Heart left ventricle (tissue), 16 donors: ENCODE measurements at regions of chr12 and their contacts with region 1.

Region 1: DNA sequence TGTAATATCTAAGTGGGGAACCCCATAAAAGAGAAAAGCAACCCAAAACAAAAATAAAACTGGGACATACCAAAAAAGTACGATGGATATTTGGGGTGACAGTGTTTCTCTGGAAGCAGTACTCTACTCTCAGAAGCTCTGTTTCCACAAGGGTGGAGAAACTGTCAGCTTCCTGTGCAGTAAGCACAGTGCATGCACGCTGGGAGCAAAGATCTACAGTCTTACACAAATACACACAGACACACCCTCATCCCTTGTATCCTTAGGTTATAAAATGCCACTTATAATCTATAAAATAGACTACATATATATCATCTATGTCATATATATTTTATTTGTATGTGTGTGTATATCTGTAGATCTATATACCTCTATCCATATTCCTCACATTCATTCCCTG is 225.8 kb upstream of the SOX5 start:
- DNase-seq: no peak
- ATAC-seq: no peak
- H3K4me3 ChIP-seq: no peak overlapping the region
- H3K27ac ChIP-seq: no peak overlapping the region
- H3K4me1 ChIP-seq: peaks cover 0 to 5% (median 0%) of the 10 kb centered on the region in 12 donors
- H3K27me3 ChIP-seq: no peaks in the 10 kb centered on the region
- CTCF ChIP-seq: no peak
- POLR2A ChIP-seq: no peak

Region 2: GRCh38 chr12:23950775-23951451 is 224.4 kb before region 1 on chr12:
- intact Hi-C with region 1: no loop called
- DNase-seq: peak in 1 of 5 donors; percentile 44
- ATAC-seq: peak; percentile 43 to 57 (median 48)
- H3K4me3 ChIP-seq: peak overlapping the region in 11 of 12 donors; percentile 20 to 60 (median 47)
- H3K27ac ChIP-seq: peak overlapping the region in 2 of 12 donors; percentile 3 to 23
- H3K4me1 ChIP-seq: peaks cover 0 to 2% (median 0%) of the 10 kb centered on the region in 12 donors
- H3K27me3 ChIP-seq: peaks cover 0 to 22% (median 7%) of the 10 kb centered on the region in 9 donors
- CTCF ChIP-seq: peak in 1 of 12 donors; percentile 1
- POLR2A ChIP-seq: no peak

Region 3: GRCh38 chr12:24121911-24122310 is 53.4 kb before region 1 on chr12:
- intact Hi-C with region 1: loop called in 1 of 10 experiments (anchors 2 kb)
- DNase-seq: no peak
- ATAC-seq: no peak
- H3K4me3 ChIP-seq: no peak overlapping the region
- H3K27ac ChIP-seq: no peak overlapping the region
- H3K4me1 ChIP-seq: peaks cover 0 to 5% (median 0%) of the 10 kb centered on the region in 12 donors
- H3K27me3 ChIP-seq: no peaks in the 10 kb centered on the region
- CTCF ChIP-seq: no peak
- POLR2A ChIP-seq: no peak